ENCODE measurements at regions of chr1 and their contacts with region 1.

Region 1: GRCh38 chr1:84573967-84574842 is at the start of gene CTBS:
- DNase-seq: peak; percentile 74 to 94 (median 83)
- ATAC-seq: peak; percentile 88
- H3K4me3 ChIP-seq: peak within 1 kb of the TSS; percentile 85
- H3K4me3 Mint-ChIP-seq: peak within 1 kb of the TSS; percentile 99
- H3K27ac ChIP-seq: peak within 1 kb of the TSS; percentile 95 to 97
- H3K27ac Mint-ChIP-seq: peak within 1 kb of the TSS; percentile 100
- H3K4me1 ChIP-seq: peaks cover 22% of the 10 kb centered on the region
- H3K4me1 Mint-ChIP-seq: peaks cover 48% of the 10 kb centered on the region
- H3K27me3 ChIP-seq: peaks cover 0 to 3% of the 10 kb centered on the region in 2 experiments
- H3K27me3 Mint-ChIP-seq: no peaks in the 10 kb centered on the region
- CTCF ChIP-seq: no peak
- total RNA-seq, gene CTBS: 19.4 to 20.0 TPM

Region 2: DNA sequence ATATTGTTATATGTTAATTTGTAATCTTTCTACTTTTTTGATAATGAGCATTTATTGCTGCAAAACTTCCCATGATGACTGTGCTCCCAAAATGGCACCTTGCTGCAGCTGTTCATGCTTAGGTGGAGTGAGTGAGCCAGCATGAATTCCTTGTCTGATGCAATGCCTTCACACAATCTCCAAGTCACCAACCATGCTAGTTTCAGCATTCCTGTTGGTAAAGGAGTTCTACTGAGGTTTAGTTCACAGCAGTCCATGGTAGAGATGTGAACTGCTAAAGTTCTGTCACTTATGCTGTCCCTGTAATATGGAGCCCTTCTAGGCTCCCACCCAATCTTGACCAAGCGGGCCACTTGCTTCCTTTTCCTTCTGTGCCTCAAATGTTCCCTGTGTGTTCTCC is 456.3 kb before region 1 on chr1:
- CTCF ChIA-PET with region 1: no interaction called
- POLR2A ChIA-PET with region 1: no interaction called
- intact Hi-C with region 1: no loop called
- DNase-seq: no peak
- ATAC-seq: no peak
- H3K4me3 ChIP-seq: no peak overlapping the region
- H3K4me3 Mint-ChIP-seq: no peak overlapping the region
- H3K27ac ChIP-seq: no peak overlapping the region
- H3K27ac Mint-ChIP-seq: no peak overlapping the region
- H3K4me1 ChIP-seq: no peaks in the 10 kb centered on the region
- H3K4me1 Mint-ChIP-seq: peaks cover 16% of the 10 kb centered on the region
- H3K27me3 ChIP-seq: no peaks in the 10 kb centered on the region
- H3K27me3 Mint-ChIP-seq: no peaks in the 10 kb centered on the region
- CTCF ChIP-seq: no peak

Region 3: DNA sequence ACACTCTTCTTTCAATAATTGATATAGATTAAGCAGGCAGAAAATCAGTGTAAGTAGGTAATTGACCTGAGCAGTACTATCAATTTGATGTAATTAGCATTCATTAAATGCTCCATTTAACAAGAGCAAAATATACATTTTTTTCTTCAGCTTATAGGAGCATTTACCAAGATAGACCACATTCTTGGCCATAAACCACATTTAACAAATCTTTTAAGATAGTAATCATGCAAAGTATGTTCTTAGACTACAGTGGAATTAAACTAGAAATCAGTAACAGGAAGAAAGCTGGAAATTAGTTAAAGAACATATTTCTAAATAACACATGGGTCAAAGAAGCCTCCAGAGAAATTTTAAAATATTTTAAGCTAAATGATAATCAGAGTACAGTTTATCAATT is 438.9 kb before region 1 on chr1:
- CTCF ChIA-PET with region 1: no interaction called
- POLR2A ChIA-PET with region 1: no interaction called
- intact Hi-C with region 1: loop called in 1 of 2 experiments (anchors 5 kb)
- DNase-seq: no peak
- ATAC-seq: no peak
- H3K4me3 ChIP-seq: no peak overlapping the region
- H3K4me3 Mint-ChIP-seq: no peak overlapping the region
- H3K27ac ChIP-seq: no peak overlapping the region
- H3K27ac Mint-ChIP-seq: no peak overlapping the region
- H3K4me1 ChIP-seq: no peaks in the 10 kb centered on the region
- H3K4me1 Mint-ChIP-seq: peaks cover 13% of the 10 kb centered on the region
- H3K27me3 ChIP-seq: no peaks in the 10 kb centered on the region
- H3K27me3 Mint-ChIP-seq: no peaks in the 10 kb centered on the region
- CTCF ChIP-seq: no peak

Region 4: DNA sequence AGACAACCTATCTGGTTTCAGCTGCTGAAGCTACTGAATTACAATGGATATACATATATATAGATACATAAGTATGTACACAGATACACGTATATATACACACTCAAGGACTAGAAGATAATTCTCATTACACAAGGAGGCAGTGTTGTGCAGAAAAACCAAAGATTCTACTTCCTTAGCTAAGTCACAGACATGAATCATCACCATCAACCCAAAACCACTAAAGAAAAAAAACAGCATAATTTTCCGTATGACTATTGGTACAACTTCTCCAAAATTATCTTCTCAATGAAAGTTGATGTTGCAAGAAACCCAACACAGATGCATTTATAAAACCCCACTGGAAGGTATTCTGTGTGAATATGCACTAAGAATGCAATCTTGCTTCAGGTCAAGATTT is 131.9 kb before region 1 on chr1:
- CTCF ChIA-PET with region 1: interaction called, 6 read pairs
- POLR2A ChIA-PET with region 1: interaction called, 21 read pairs
- intact Hi-C with region 1: loop called in 1 of 2 experiments (anchors 5 kb)
- DNase-seq: peak in 4 of 14 experiments; percentile 7 to 89 (median 86)
- ATAC-seq: peak; percentile 98
- H3K4me3 ChIP-seq: no peak overlapping the region
- H3K4me3 Mint-ChIP-seq: peak overlapping the region; percentile 5
- H3K27ac ChIP-seq: no peak overlapping the region
- H3K27ac Mint-ChIP-seq: peak overlapping the region; percentile 1
- H3K4me1 ChIP-seq: peaks cover 17% of the 10 kb centered on the region
- H3K4me1 Mint-ChIP-seq: peaks cover 11% of the 10 kb centered on the region
- H3K27me3 ChIP-seq: no peaks in the 10 kb centered on the region
- H3K27me3 Mint-ChIP-seq: peaks cover 15% of the 10 kb centered on the region
- CTCF ChIP-seq: peak; percentile 69

Region 5: GRCh38 chr1:84506002-84506728 is 68.0 kb before region 1 on chr1 and contains the starts of genes GNG5 and SPATA1:
- CTCF ChIA-PET with region 1: interaction called, 3 read pairs
- POLR2A ChIA-PET with region 1: interaction called, 81 read pairs
- intact Hi-C with region 1: loop called (anchors 2 kb)
- DNase-seq: peak; percentile 94 to 99 (median 97)
- ATAC-seq: peak; percentile 92
- H3K4me3 ChIP-seq: peak within 1 kb of the TSS; percentile 95
- H3K4me3 Mint-ChIP-seq: peak within 1 kb of the TSS; percentile 96
- H3K27ac ChIP-seq: peak within 1 kb of the TSS; percentile 75 to 91
- H3K27ac Mint-ChIP-seq: peak within 1 kb of the TSS; percentile 88
- H3K4me1 ChIP-seq: peaks cover 21% of the 10 kb centered on the region
- H3K4me1 Mint-ChIP-seq: peaks cover 62% of the 10 kb centered on the region
- H3K27me3 ChIP-seq: no peaks in the 10 kb centered on the region
- H3K27me3 Mint-ChIP-seq: no peaks in the 10 kb centered on the region
- CTCF ChIP-seq: no peak
- total RNA-seq, gene GNG5: 23.6 to 24.6 TPM
- total RNA-seq, gene SPATA1: 0.11 to 0.61 TPM

Region 6: DNA sequence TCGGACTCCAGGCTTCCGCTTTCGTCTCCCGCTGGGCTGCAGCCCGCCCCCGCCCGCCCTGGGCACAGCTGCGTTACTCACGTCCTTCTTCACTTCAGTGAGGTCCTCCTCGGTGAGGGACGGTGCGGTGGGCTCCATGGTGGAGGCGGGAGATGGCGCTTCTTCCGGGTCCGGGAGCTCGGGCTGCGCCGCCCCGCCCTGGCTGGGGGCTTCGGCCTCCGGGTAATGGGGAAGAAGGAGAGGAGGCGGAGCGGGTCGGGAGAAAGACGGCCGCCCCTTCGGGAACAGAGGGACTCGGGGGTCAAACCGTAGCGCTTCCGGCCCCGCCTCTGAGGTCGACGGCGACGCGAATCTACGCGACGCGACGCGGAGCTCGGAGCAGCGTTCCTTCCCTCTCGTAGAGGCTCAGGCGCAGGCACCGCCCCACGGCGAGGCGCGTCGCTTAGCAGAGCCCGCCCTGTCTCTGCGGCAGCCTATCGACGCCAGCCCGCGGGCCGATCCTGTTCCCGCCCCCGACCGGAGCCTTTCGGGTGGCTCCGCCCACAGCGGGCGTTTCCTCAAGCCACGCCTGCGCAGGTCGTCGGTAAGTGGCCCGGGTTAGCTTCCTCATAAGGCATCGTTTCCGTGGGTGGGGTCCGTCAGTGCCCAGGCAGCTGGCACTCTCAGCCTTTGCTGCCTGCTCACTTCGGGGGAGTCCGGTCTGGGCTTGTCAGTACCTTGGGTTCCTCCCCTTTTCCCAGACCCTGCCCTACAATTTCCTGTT is 702.2 kb after region 1 on chr1 and contains the start of gene BCL10:
- CTCF ChIA-PET with region 1: no interaction called
- POLR2A ChIA-PET with region 1: interaction called, 15 read pairs
- intact Hi-C with region 1: loop called (anchors 5 to 10 kb)
- DNase-seq: peak; percentile 93 to 99 (median 96)
- ATAC-seq: peak; percentile 95
- H3K4me3 ChIP-seq: peak within 1 kb of the TSS; percentile 94
- H3K4me3 Mint-ChIP-seq: peak within 1 kb of the TSS; percentile 92
- H3K27ac ChIP-seq: peak within 1 kb of the TSS; percentile 90 to 99
- H3K27ac Mint-ChIP-seq: peak within 1 kb of the TSS; percentile 95
- H3K4me1 ChIP-seq: peaks cover 28% of the 10 kb centered on the region
- H3K4me1 Mint-ChIP-seq: peaks cover 57% of the 10 kb centered on the region
- H3K27me3 ChIP-seq: no peaks in the 10 kb centered on the region
- H3K27me3 Mint-ChIP-seq: no peaks in the 10 kb centered on the region
- CTCF ChIP-seq: no peak
- total RNA-seq, gene BCL10: 50.0 to 52.0 TPM

Region 7: DNA sequence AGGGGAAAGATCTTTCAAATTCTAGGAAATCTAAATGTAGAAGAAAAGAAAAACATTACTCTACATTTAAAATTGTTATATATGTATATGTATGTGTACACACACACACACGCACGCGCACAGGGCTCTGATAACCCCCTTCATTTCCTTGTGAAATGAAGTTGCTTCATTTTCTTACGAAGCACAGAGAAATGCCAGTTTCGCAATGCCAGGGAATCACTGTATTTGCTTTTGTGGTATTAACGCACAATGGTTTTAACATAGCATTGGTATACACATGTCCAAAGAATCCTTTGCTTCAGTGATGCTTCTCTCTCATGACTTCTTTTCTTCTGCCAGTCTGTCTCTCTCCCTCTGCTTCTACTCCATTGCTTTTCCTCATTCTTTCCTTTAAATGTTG is 899.2 kb after region 1 on chr1:
- CTCF ChIA-PET with region 1: no interaction called
- POLR2A ChIA-PET with region 1: no interaction called
- intact Hi-C with region 1: no loop called
- DNase-seq: no peak
- ATAC-seq: no peak
- H3K4me3 ChIP-seq: no peak overlapping the region
- H3K4me3 Mint-ChIP-seq: no peak overlapping the region
- H3K27ac ChIP-seq: no peak overlapping the region
- H3K27ac Mint-ChIP-seq: no peak overlapping the region
- H3K4me1 ChIP-seq: no peaks in the 10 kb centered on the region
- H3K4me1 Mint-ChIP-seq: no peaks in the 10 kb centered on the region
- H3K27me3 ChIP-seq: peaks cover 0 to 3% of the 10 kb centered on the region in 2 experiments
- H3K27me3 Mint-ChIP-seq: peaks cover 28% of the 10 kb centered on the region
- CTCF ChIP-seq: no peak